ENCODE measurements at regions of chr1 and their contacts with region 1.

Region 1: DNA sequence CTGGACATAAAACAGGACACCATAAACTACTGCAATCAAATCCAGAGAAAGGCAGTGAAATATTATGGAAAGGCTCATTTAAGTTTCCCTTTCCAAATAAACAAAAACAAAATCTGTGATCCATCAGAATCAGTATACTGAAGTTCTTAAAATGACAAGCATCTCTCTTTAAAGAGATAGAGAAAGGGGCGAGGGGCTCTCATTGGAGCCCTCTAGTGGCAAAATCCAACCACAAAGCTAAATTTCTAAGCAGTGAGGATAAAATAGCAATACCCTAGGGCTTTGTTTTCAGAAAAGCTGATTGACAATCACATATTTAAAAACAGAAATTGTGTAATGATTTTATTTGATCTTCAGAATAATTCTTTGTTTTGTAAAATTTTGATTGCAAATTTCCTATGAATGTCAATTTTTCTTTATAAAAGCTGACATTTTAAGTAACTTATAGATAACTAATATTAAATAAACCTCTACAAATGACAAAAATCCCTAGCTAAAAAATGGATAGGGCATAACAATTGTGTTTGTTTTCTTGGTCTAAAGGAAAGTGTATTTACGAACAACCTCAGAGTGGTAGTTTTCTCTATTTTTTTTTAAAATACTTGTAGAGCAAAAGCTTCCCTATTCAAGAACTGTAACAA is 138.2 kb downstream of the COL24A1 start:
- DNase-seq: peak; percentile 62
- H3K4me3 Mint-ChIP-seq: no peak overlapping the region
- H3K27ac Mint-ChIP-seq: no peak overlapping the region
- H3K4me1 Mint-ChIP-seq: no peaks in the 10 kb centered on the region
- H3K27me3 Mint-ChIP-seq: no peaks in the 10 kb centered on the region

Region 2: DNA sequence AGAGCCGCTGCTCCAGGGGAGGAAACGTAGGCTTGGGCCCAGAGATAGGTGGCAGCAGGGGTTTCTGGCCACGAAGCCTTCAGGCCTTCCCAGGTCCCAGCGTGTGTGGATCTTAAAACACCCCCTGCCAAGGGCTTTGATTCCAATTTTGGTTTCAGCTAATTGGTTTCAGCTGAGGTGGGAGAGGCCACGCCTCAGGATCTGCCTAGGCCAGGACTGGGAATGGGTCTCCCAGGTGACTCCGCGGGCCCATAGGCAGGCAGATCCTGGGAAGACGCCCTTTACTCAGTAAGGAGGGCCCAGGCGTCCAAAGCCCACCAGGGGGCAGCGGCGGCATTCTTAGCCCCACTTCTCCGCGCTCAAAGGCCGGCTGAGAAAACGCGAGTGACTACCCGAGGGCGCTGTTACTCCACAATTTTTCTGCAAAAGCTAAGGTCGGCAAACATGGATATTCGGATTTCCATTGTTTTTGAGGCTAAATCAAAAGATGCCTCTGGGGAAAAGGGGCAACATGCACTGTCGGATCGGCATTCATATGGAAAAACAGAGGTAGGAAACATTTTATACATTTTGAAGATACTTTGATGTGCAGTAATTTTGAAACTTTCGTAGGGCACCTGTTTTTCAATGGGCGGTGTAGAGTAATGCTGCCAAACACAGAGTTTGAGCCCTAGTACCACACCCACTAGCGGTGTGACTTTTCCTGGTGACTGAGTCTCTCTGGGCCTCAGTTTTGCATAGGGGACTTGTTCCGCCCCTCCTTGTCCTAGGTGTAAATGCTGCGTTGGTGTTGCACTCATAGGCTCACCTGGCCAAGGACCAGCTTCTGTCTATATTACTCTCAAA is 710.2 kb before region 1 on chr1:
- intact Hi-C with region 1: loop called (anchors 2 kb)
- DNase-seq: peak; percentile 85
- H3K4me3 Mint-ChIP-seq: no peak overlapping the region
- H3K27ac Mint-ChIP-seq: no peak overlapping the region
- H3K4me1 Mint-ChIP-seq: peaks cover 2% of the 10 kb centered on the region
- H3K27me3 Mint-ChIP-seq: peaks cover 68% of the 10 kb centered on the region